Esophagus squamous epithelium (tissue), 5 donors: ENCODE measurements at regions of chr15 and their contacts with region 1.

Region 1: GRCh38 chr15:75371486-75371885 is 3.1 kb upstream of the MAN2C1 start:
- DNase-seq: no peak
- H3K4me3 ChIP-seq: no peak overlapping the region
- H3K27ac ChIP-seq: peak overlapping the region in 2 of 4 donors; percentile 54 to 55
- H3K4me1 ChIP-seq: peaks cover 8 to 56% (median 32%) of the 10 kb centered on the region in 3 donors
- H3K27me3 ChIP-seq: no peaks in the 10 kb centered on the region
- CTCF ChIP-seq: no peak
- POLR2A ChIP-seq: no peak

Region 2: DNA sequence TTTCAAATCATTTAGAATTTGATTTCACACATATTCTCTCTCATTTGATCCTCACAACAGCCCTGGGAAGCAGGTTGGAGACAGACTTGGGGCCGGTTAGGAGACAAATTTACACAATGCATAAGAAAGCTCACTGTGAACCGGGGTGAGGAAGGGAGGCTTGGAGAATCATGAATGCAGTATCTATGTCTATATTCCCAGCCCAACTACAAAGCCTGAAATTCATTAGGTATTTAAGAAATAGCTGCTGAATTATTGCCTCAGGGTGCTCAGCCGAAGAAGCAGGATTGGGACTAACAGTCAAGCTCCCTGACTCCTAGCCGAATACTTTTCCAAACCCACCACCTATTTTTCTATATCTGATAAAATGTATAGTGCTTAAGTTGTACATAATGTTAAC is 121.8 kb before region 1 on chr15:
- intact Hi-C with region 1: no loop called
- DNase-seq: no peak
- H3K4me3 ChIP-seq: no peak overlapping the region
- H3K27ac ChIP-seq: no peak overlapping the region
- H3K4me1 ChIP-seq: no peaks in the 10 kb centered on the region
- H3K27me3 ChIP-seq: peaks cover 0 to 66% (median 0%) of the 10 kb centered on the region in 4 donors
- CTCF ChIP-seq: no peak
- POLR2A ChIP-seq: no peak

Region 3: GRCh38 chr15:75327005-75327404 is 44.5 kb before region 1 on chr15:
- intact Hi-C with region 1: no loop called
- DNase-seq: no peak
- H3K4me3 ChIP-seq: no peak overlapping the region
- H3K27ac ChIP-seq: no peak overlapping the region
- H3K4me1 ChIP-seq: no peaks in the 10 kb centered on the region
- H3K27me3 ChIP-seq: no peaks in the 10 kb centered on the region
- CTCF ChIP-seq: no peak
- POLR2A ChIP-seq: no peak

Region 4: GRCh38 chr15:75446151-75446550 is 74.7 kb after region 1 on chr15:
- intact Hi-C with region 1: loop called (anchors 10 kb)
- DNase-seq: no peak
- H3K4me3 ChIP-seq: no peak overlapping the region
- H3K27ac ChIP-seq: no peak overlapping the region
- H3K4me1 ChIP-seq: peaks cover 15 to 68% (median 16%) of the 10 kb centered on the region in 3 donors
- H3K27me3 ChIP-seq: no peaks in the 10 kb centered on the region
- CTCF ChIP-seq: no peak
- POLR2A ChIP-seq: no peak